Activated B cell treated with CpG ODN at 0.5 μM for 24 hours (primary cell): ENCODE measurements at regions of chr1 and their contacts with region 1.

Region 1: DNA sequence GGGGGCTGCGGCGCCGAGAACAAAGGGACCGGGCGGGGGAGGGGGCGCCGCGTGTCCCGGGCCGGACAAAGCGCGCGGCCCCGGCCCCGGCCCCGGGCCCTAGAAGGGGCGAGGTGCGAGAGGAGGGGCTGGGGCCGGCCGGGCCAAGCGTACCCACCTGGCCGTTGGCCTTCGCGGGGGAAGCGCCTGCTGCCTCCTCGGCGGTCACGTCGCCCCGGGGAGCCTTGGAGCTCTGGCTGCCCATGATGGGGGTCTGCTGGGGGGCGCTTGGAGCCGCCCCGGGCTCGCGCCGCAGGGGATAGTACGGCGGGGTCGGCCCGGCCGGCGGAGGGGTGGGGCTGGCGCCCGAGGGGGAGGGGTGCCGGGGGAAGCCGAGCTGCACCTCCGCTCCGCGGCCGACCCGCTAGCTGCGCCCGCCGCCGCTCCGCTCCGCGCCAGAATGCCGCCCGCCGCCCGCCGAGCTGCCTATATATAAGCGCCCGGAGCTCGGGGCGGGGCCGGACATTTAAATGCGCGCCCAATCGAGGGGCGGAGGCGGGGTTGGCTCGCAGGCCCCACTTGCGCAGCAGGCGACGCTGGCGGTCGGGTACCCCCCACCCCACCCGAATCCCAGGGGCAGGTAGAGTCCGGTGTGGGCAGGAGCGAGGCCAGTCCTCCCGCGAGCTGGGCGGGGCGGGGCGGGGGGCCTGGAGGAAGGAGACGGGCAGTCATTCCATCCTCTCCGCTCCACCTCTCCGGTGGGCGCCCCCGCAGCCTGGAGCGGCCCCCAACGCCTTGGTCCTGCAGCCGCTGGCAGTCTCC is at the start of gene MARCKSL1:
- DNase-seq: peak; percentile 90
- ATAC-seq: peak; percentile 54
- H3K4me3 Mint-ChIP-seq: peak within 1 kb of the TSS; percentile 86
- H3K27ac Mint-ChIP-seq: peak within 1 kb of the TSS; percentile 87
- H3K4me1 Mint-ChIP-seq: peaks cover 61% of the 10 kb centered on the region
- H3K27me3 Mint-ChIP-seq: no peaks in the 10 kb centered on the region
- CTCF ChIP-seq: no peak
- total RNA-seq, gene MARCKSL1: 132 TPM in 2 replicates

Region 2: GRCh38 chr1:32072622-32073298 is 263.2 kb before region 1 on chr1 and contains the start of gene TMEM39B:
- CTCF ChIA-PET with region 1: no interaction called
- POLR2A ChIA-PET with region 1: interaction called, 7 read pairs
- intact Hi-C with region 1: loop called (anchors 1 kb)
- DNase-seq: peak; percentile 92
- ATAC-seq: peak; percentile 82
- H3K4me3 Mint-ChIP-seq: peak within 1 kb of the TSS; percentile 93
- H3K27ac Mint-ChIP-seq: peak within 1 kb of the TSS; percentile 95
- H3K4me1 Mint-ChIP-seq: peaks cover 35% of the 10 kb centered on the region
- H3K27me3 Mint-ChIP-seq: no peaks in the 10 kb centered on the region
- CTCF ChIP-seq: no peak
- total RNA-seq, gene TMEM39B: 23.1 and 23.8 TPM in 2 replicates

Region 3: DNA sequence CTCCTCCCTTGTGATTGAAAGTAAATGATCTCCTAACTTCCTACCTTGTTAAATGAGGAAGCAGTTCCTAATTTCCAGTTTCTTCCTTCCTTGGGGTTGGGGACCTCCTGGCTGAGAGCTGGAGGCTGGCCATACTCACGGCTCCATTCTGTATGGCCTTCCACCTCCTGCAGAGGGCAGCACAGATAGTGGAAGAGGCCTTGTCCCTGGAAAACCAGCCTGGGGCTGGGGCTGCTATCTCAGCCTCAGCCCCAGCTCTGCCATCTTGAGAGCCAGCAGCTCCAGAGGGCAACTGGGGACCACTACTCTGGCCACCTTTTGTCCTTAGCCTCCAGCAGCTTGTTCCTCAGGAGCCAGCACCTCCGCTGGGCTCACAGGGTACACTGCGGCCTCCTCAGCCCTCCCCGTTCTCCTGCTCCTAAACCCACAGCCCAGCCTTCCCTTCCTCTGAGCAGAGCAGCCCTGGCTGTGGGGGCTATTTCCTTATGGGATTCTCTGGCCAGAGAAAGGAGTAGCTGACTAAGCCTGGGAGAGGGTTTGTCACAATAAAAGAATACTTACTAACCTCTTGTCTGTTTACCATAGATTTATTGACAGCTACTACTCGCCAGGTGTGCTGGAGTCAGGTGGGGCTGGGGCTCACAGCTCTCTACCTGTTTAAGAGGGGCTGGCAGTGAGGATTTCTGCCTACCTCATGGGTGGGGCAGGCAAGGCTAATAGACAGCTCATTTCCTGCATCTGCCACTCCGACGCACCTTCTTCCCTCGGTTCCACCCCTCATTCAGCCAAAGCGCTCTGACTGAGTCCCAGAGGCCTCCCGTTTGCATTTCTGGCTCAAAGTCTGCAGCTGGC is 120.1 kb before region 1 on chr1:
- CTCF ChIA-PET with region 1: interaction called, 15 read pairs
- POLR2A ChIA-PET with region 1: interaction called, 26 read pairs
- intact Hi-C with region 1: loop called (anchors 1 kb)
- DNase-seq: no peak
- ATAC-seq: peak; percentile 93
- H3K4me3 Mint-ChIP-seq: no peak overlapping the region
- H3K27ac Mint-ChIP-seq: no peak overlapping the region
- H3K4me1 Mint-ChIP-seq: peaks cover 21% of the 10 kb centered on the region
- H3K27me3 Mint-ChIP-seq: no peaks in the 10 kb centered on the region
- CTCF ChIP-seq: peak; percentile 44

Region 4: GRCh38 chr1:32247983-32248889 is 87.8 kb before region 1 on chr1:
- CTCF ChIA-PET with region 1: interaction called, 8 read pairs
- POLR2A ChIA-PET with region 1: interaction called, 95 read pairs
- intact Hi-C with region 1: no loop called
- DNase-seq: peak; percentile 71
- ATAC-seq: peak; percentile 13
- H3K4me3 Mint-ChIP-seq: peak overlapping the region; percentile 45
- H3K27ac Mint-ChIP-seq: peak overlapping the region; percentile 81
- H3K4me1 Mint-ChIP-seq: peaks cover 70% of the 10 kb centered on the region
- H3K27me3 Mint-ChIP-seq: no peaks in the 10 kb centered on the region
- CTCF ChIP-seq: no peak

Region 5: DNA sequence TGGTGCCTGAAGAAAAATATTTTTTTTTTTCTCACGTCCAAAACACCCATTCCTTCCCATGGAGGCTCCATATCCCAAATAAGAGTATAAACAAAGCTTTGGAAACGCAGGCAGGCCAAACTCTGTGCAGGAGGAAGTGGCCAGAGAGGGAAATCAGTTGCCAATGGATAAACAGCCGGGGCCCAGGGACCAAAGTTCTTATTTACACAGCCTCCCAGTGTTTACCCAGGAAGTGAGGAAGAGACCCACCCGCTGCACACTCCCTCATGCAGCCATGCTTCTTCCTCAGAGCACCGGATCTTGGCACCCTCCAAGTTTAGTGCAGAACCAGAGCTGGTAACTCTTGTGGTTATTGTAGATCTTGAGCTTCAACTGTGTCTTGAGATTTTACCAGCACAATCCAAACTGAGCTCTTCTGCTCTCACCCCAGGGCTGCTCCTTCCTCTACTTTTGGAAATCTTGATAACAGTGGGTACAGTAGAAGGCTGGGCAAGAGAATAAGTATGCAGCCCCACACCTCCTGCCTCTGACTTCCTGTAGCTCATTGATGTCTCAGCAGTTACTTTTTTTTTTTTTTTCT is 14.2 kb before region 1 on chr1:
- CTCF ChIA-PET with region 1: interaction called, 7 read pairs
- POLR2A ChIA-PET with region 1: interaction called, 151 read pairs
- intact Hi-C with region 1: loop called (anchors 1 kb)
- DNase-seq: no peak
- ATAC-seq: peak; percentile 47
- H3K4me3 Mint-ChIP-seq: peak overlapping the region; percentile 68
- H3K27ac Mint-ChIP-seq: peak overlapping the region; percentile 89
- H3K4me1 Mint-ChIP-seq: peaks cover 71% of the 10 kb centered on the region
- H3K27me3 Mint-ChIP-seq: no peaks in the 10 kb centered on the region
- CTCF ChIP-seq: no peak

Region 6: GRCh38 chr1:32372149-32372756 is 36.3 kb after region 1 on chr1:
- CTCF ChIA-PET with region 1: interaction called, 4 read pairs
- POLR2A ChIA-PET with region 1: interaction called, 7 read pairs
- intact Hi-C with region 1: loop called (anchors 1 kb)
- DNase-seq: no peak
- ATAC-seq: peak; percentile 80
- H3K4me3 Mint-ChIP-seq: no peak overlapping the region
- H3K27ac Mint-ChIP-seq: no peak overlapping the region
- H3K4me1 Mint-ChIP-seq: peaks cover 11% of the 10 kb centered on the region
- H3K27me3 Mint-ChIP-seq: no peaks in the 10 kb centered on the region
- CTCF ChIP-seq: no peak

Region 7: GRCh38 chr1:32650752-32651460 is 314.9 kb after region 1 on chr1 and contains the start of gene RBBP4:
- CTCF ChIA-PET with region 1: no interaction called
- POLR2A ChIA-PET with region 1: interaction called, 9 read pairs
- intact Hi-C with region 1: loop called (anchors 1 kb)
- DNase-seq: peak; percentile 99
- ATAC-seq: peak; percentile 82
- H3K4me3 Mint-ChIP-seq: peak within 1 kb of the TSS; percentile 97
- H3K27ac Mint-ChIP-seq: peak within 1 kb of the TSS; percentile 100
- H3K4me1 Mint-ChIP-seq: peaks cover 70% of the 10 kb centered on the region
- H3K27me3 Mint-ChIP-seq: no peaks in the 10 kb centered on the region
- CTCF ChIP-seq: no peak
- total RNA-seq, gene RBBP4: 228 and 241 TPM in 2 replicates